Left colon (tissue), 2 donors: ENCODE measurements at regions of chr3 and their contacts with region 1.

Region 1: DNA sequence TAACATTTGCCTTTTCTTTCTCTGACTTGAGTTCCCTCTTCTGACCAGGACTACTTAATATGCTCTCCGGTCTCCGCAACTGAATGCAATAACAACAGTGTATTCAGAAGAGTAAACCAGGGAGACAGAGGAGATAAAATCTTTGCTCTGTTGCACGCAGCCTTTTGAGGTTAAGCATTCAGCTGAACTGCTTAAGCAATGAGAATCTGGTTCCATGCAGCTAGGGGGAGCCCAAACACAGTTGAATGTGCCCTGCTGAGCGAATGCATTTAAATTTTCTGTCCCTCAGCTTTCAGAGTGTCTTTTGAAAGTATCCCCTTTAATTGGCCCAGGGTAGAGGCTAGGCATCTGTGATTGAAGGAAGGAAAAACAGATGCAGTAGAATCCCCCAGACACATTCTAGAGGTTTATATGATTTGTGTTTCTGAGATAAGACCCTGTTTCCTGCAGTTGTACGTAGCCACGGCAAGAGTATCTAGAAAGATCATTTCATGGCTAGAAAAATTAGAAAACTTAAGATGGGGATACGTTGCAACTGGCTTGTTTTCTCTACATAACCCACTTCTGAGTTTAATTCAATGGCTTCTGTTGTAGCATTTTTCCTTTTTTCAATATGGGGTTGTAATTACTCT is 309.6 kb downstream of the TUSC7 start:
- DNase-seq: peak; percentile 34 to 63
- ATAC-seq: peak; percentile 84

Region 2: GRCh38 chr3:117355566-117355965 is 336.4 kb after region 1 on chr3:
- intact Hi-C with region 1: loop called in 1 of 2 experiments (anchors 5 kb)
- DNase-seq: peak in 1 of 2 donors; percentile 9
- ATAC-seq: peak; percentile 90

Region 3: GRCh38 chr3:117997201-117998049 is 978.2 kb after region 1 on chr3:
- intact Hi-C with region 1: loop called in 1 of 2 experiments (anchors 10 kb)
- DNase-seq: peak; percentile 46 to 76
- ATAC-seq: peak; percentile 98